ENCODE measurements at regions of chr1 and their contacts with region 1.

Region 1: GRCh38 chr1:155193275-155193990 is 14.3 kb downstream of the THBS3 start:
- DNase-seq: peak; percentile 84 to 93
- ATAC-seq: peak; percentile 76 to 90
- H3K4me3 ChIP-seq: peak overlapping the region; percentile 79
- H3K27ac ChIP-seq: peak overlapping the region; percentile 84 to 96
- H3K4me1 ChIP-seq: peaks cover 22% of the 10 kb centered on the region
- CTCF ChIP-seq: peak; percentile 95
- EP300 ChIP-seq: no peak
- POLR2A ChIP-seq: peak; percentile 49; the same call in 1 of the 2 replicates
- RAD21 ChIP-seq: peak; percentile 59 to 64; a peak in 4 of 5 replicates

Region 2: DNA sequence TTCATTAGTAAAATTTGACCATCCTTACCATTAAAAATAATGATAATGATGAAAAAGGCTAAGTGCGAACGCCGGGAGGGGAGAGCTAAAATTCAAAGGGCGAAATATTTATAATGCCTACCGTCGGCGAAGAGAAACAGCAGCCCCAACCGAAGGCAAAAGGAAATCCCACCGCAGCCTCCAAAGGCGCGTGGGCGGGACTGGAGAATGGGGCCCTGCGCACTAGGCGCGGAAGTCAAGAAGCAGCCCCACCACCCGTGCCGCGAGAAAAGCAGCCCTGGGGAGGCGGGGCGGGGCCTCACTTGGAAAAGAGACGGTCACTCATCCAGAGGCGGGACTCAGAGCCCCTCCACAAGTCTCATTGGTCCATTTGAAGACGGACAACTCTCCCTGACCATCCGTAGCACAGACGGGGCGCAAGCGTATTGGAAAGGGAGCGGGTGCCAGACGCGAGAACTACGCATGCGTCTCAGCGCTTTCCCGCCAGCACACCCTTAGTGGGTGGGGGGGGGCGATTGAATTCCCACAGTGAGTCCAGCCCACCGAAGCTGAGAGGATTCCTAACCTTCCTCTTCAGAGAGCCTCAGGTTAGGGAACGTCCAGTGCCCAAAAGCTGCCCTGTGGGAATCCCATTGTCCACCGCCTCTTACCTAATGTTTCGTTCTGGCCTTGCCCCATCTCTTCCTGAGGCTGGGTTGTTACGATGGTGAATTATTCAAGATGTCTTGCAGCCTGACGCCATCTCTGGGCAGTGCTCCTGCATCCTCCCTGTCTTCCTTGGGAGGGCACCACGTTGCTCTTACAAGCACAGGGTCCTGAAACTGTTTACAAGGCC is 34.0 kb after region 1 on chr1:
- CTCF ChIA-PET with region 1: interaction called, 19 read pairs
- POLR2A ChIA-PET with region 1: interaction called, 17 read pairs
- DNase-seq: peak; percentile 99 to 100
- ATAC-seq: peak; percentile 94 to 97
- H3K4me3 ChIP-seq: peak overlapping the region; percentile 57
- H3K27ac ChIP-seq: peak overlapping the region; percentile 88 to 90
- H3K4me1 ChIP-seq: peaks cover 43% of the 10 kb centered on the region
- CTCF ChIP-seq: no peak
- EP300 ChIP-seq: no peak
- POLR2A ChIP-seq: peak; percentile 82
- RAD21 ChIP-seq: no peak

Measured in A549 (cell line).